H1 (cell line): ENCODE measurements at regions of chr19 and their contacts with region 1.

Region 1: DNA sequence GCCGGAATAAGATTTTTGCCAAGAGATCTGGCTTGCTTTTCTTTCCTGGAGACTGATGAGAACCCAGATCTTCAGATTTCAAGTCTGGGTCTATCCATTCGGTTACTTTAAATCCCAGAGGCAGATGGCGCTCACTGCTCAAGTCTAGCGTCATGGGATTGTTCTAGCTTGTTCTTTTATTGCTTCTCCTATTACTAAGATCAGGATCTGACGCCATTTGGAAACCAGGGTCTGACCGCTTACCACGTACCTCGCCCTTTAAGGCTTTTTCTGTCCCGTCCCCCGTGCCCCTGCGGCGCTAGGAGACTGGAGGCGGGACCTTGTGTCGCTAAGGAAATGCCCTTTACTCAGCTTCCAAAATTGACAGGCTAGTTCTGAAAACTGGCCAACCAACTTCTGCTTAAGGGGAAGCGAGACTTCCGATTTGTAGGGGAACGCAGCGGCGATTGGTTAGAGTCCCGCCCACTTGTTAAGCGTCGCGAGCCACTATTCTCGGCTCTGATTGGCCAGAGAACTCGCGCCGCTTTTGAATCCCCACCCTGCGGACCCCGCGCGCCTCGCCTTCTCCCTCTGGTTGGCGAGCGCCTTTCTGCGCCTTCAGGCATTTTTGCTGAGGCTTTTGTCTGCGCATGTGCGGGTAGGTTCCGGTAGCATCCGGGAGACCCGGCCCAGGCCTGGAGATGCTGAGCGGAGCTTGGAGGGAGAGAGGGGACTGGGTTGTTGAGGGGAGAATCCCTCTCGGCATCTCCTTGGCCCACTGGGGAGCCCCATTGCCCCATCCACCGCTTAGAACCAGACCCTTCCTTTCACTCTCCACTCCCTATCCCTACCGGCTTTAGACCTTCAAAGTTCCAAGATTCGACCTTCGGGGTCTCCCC is 3.8 kb upstream of the C19orf84 start:
- DNase-seq: peak; percentile 94 to 98
- H3K4me3 ChIP-seq: peak overlapping the region; percentile 67 to 91 (median 83)
- H3K27ac ChIP-seq: peak overlapping the region; percentile 86
- H3K4me1 ChIP-seq: peaks cover 0 to 7% (median under 1%) of the 10 kb centered on the region in 4 experiments; a peak in 4 of 7 replicates
- H3K27me3 ChIP-seq: no peaks in the 10 kb centered on the region
- CTCF ChIP-seq: no peak
- EP300 ChIP-seq: no peak
- POLR2A ChIP-seq: peak; percentile 75 to 85
- RAD21 ChIP-seq: no peak; a peak in 1 of 4 replicates

Region 2: DNA sequence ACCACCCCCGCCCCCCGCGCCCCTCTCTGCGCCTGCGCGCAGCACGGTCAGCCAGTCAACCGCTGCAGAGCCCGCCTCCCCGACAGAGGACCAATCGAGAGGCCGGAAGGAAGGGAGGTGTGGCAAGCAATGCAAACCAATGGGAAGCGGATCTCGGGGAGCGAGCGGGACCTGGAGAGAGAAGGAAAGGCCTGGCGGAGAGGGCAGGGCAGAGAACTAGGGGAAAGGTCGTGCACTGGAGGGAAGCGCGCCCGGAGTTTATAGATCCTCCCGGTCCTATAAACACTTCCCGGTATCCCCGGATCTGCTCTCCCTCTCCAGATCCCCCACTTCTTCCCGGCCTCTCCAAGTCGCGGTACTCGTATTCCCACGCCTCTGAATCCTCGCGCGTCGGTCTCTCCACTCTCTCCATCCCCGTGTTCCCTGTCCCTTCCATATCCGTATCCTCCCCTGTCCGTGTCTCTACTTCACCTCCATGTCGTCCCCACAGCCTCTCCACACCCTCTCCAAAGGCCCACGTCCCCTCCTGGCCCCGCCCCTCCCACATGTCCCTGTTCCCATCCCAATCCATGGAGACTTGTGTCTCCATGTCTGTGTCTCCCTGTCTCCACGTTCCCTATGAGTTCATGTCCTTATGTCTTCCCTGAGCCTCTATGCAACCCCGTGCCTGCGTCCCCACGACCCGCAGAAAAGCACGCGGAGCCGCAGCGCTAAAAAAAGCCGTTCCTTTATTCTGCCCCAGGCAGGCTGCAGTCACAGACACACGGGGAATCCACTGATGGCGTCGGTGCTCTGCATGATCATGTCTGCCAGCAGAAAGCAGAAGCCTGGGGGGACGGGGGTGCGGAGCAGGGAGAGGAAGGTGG is 27.6 kb before region 1 on chr19:
- CTCF ChIA-PET with region 1: interaction called, 14 read pairs
- POLR2A ChIA-PET with region 1: interaction called, 11 read pairs
- DNase-seq: peak; percentile 93 to 95
- H3K4me3 ChIP-seq: peak overlapping the region; percentile 79 to 97 (median 90)
- H3K27ac ChIP-seq: 0 out of 2 replicates have a peak overlapping the region, but pooled peaks have one; percentile 0
- H3K4me1 ChIP-seq: peaks cover 2 to 18% (median 11%) of the 10 kb centered on the region in 4 experiments
- H3K27me3 ChIP-seq: no peaks in the 10 kb centered on the region
- CTCF ChIP-seq: no peak
- EP300 ChIP-seq: no peak
- POLR2A ChIP-seq: peak in 1 of 2 experiments; percentile 90; a peak in 2 of 3 replicates
- RAD21 ChIP-seq: no peak

Region 3: GRCh38 chr19:51372649-51373504 is 21.3 kb before region 1 on chr19 and contains the start of gene NKG7:
- CTCF ChIA-PET with region 1: interaction called, 7 read pairs
- POLR2A ChIA-PET with region 1: interaction called, 11 read pairs
- DNase-seq: no peak
- H3K4me3 ChIP-seq: no peak within 1 kb of the TSS
- H3K27ac ChIP-seq: no peak within 1 kb of the TSS
- H3K4me1 ChIP-seq: peaks cover 0 to 9% (median 8%) of the 10 kb centered on the region in 4 experiments; a peak in 5 of 7 replicates
- H3K27me3 ChIP-seq: no peaks in the 10 kb centered on the region; a peak in 2 of 7 replicates
- CTCF ChIP-seq: no peak
- EP300 ChIP-seq: no peak
- POLR2A ChIP-seq: no peak
- RAD21 ChIP-seq: no peak
- total RNA-seq, gene NKG7: not detected in 2 replicates

Region 4: DNA sequence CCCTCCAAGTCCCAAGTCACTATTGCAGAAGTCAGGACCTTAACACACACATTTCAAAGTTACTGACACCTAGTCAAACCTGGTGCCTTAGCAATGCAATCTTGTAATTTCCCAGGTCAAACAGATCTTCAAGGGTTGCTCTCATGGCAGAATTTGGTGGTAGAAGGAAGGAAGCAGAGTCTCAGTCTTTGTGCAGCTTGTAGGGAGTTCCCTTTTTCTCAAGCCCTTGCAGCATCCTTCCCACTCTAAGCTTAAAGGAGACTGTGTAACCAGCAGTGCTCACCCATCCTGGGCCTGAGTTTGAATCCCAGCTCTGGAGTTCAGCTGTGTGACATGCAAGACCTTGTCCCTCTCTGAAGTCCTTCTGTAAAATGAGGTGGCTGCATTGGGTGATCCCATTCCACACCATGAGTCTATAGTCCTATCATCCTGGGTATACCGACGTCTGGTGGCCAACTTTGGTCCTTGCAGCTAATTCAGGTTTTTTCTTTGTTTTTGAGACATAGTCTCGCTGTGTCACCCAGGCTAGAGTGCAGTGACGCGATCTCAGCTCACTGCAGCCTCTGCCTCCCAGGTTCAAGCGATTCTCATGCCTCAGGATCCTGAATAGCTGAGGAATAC is 13.4 kb after region 1 on chr19:
- CTCF ChIA-PET with region 1: interaction called, 74 read pairs
- POLR2A ChIA-PET with region 1: interaction called, 4 read pairs
- DNase-seq: no peak
- H3K4me3 ChIP-seq: no peak overlapping the region
- H3K27ac ChIP-seq: no peak overlapping the region
- H3K4me1 ChIP-seq: peaks cover 0 to 13% (median 4%) of the 10 kb centered on the region in 4 experiments; a peak in 6 of 7 replicates
- H3K27me3 ChIP-seq: no peaks in the 10 kb centered on the region
- CTCF ChIP-seq: peak; percentile 7 to 77 (median 64)
- EP300 ChIP-seq: no peak
- POLR2A ChIP-seq: no peak
- RAD21 ChIP-seq: peak; percentile 54 to 69

Region 5: GRCh38 chr19:51422053-51422448 is 27.9 kb after region 1 on chr19:
- CTCF ChIA-PET with region 1: interaction called, 22 read pairs
- POLR2A ChIA-PET with region 1: interaction called, 4 read pairs
- DNase-seq: peak; percentile 69 to 100
- H3K4me3 ChIP-seq: peak overlapping the region in 3 of 4 experiments; percentile 46 to 58 (median 49); a peak in 6 of 8 replicates
- H3K27ac ChIP-seq: no peak overlapping the region
- H3K4me1 ChIP-seq: peaks cover 0 to 11% (median 3%) of the 10 kb centered on the region in 4 experiments; a peak in 2 of 7 replicates
- H3K27me3 ChIP-seq: peaks cover 0 to 5% (median 2%) of the 10 kb centered on the region in 4 experiments; a peak in 3 of 7 replicates
- CTCF ChIP-seq: peak; percentile 92 to 97 (median 95)
- EP300 ChIP-seq: 0 out of 3 replicates have a peak, but pooled peaks of 1 of the 2 experiments have one; percentile 23
- POLR2A ChIP-seq: no peak
- RAD21 ChIP-seq: peak; percentile 65 to 77

Region 6: DNA sequence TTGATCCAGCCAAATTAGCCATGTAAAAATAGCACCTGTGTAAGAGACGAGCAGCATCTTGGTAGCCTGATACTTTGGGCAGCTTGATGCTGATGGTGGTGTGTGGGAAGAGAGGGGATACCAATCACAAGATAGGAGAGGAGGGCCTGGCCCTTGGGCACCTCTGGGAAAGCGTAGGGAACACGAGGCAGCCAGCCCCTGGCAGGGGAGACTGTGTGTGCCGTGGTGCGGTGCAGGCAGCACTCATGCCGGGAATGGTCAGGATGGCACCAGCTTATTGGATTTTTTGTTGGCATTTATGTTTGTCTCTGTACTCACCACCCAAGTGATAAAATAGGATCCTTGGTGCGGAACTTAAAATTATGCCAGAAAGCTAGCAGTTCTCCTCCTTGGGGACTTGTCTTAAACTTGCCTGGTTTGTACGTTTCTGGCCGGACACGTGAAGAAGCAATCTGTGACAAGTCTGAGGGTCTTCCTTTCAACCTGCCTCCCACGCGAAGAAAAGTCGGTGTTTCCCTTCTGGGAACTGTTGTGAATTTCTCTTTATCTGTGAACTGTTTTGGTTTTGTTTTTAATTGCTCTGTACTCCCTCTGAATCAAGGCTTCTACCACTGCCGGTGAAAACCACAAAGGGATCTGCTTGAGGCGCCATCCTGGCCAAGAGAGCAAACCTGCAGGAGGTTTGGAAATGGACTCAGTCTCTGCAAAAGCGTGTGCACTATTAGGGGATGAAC is 54.0 kb after region 1 on chr19:
- CTCF ChIA-PET with region 1: no interaction called
- POLR2A ChIA-PET with region 1: no interaction called
- DNase-seq: no peak
- H3K4me3 ChIP-seq: no peak overlapping the region
- H3K27ac ChIP-seq: no peak overlapping the region
- H3K4me1 ChIP-seq: no peaks in the 10 kb centered on the region
- H3K27me3 ChIP-seq: no peaks in the 10 kb centered on the region
- CTCF ChIP-seq: no peak
- EP300 ChIP-seq: no peak
- POLR2A ChIP-seq: no peak
- RAD21 ChIP-seq: no peak